ENCODE measurements at regions of chr11 and their contacts with region 1.

Region 1: DNA sequence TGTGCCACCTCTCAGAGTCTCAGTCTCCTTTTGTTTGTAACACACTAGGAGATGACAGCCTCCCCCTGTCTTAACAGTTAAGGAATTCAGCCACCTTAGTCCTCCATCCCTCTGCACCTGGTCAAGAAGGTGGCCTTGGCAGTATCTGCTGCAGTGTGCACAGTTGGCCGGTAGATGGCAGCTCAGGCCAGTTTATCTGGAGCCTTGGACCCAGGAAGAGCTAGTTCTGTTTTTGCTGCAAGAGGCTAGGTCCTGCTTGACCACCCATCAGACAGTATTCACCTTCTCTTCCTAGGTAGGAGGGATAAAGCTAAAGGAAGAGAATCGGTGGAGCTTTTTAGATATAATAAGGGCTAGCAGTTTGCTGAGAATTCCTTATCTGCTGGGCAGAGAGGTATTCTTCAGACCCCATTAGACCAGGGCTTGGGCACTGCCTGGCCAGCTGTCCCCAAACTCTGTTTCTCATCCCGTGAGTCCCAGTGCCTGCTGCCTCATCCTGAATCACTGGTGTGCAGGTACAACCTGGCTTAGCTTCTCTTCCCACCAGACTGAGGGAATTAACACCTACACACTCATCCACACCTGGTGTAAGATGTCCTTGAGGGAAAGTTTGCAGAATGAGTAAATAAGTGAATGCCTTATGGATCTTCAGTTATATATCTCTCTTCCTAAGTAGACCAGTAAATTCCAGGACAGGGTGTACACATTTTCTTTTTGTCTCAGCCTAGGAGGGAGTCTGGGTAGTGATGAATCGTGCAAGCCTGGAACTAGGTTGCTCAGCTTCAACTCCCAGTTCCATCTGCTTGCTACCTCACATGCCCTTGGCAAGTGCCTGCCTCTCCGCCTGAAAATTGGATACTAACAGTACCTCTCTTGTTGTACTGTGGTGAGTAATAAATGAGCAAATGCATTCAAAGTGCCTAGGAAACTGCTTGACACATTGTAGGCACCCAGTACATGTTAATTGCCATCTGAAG is 70.8 kb upstream of the NARS2 start:
- DNase-seq: peak; percentile 90
- H3K4me3 Mint-ChIP-seq: peak overlapping the region; percentile 21
- H3K27ac Mint-ChIP-seq: peak overlapping the region; percentile 21
- H3K4me1 Mint-ChIP-seq: peaks cover 38% of the 10 kb centered on the region
- H3K27me3 Mint-ChIP-seq: no peaks in the 10 kb centered on the region

Region 2: GRCh38 chr11:78416305-78417178 is 229.0 kb before region 1 on chr11:
- intact Hi-C with region 1: loop called (anchors 10 kb)
- DNase-seq: peak; percentile 95
- H3K4me3 Mint-ChIP-seq: peak overlapping the region; percentile 98
- H3K27ac Mint-ChIP-seq: peak overlapping the region; percentile 95
- H3K4me1 Mint-ChIP-seq: peaks cover 57% of the 10 kb centered on the region
- H3K27me3 Mint-ChIP-seq: peaks cover 11% of the 10 kb centered on the region

Region 3: DNA sequence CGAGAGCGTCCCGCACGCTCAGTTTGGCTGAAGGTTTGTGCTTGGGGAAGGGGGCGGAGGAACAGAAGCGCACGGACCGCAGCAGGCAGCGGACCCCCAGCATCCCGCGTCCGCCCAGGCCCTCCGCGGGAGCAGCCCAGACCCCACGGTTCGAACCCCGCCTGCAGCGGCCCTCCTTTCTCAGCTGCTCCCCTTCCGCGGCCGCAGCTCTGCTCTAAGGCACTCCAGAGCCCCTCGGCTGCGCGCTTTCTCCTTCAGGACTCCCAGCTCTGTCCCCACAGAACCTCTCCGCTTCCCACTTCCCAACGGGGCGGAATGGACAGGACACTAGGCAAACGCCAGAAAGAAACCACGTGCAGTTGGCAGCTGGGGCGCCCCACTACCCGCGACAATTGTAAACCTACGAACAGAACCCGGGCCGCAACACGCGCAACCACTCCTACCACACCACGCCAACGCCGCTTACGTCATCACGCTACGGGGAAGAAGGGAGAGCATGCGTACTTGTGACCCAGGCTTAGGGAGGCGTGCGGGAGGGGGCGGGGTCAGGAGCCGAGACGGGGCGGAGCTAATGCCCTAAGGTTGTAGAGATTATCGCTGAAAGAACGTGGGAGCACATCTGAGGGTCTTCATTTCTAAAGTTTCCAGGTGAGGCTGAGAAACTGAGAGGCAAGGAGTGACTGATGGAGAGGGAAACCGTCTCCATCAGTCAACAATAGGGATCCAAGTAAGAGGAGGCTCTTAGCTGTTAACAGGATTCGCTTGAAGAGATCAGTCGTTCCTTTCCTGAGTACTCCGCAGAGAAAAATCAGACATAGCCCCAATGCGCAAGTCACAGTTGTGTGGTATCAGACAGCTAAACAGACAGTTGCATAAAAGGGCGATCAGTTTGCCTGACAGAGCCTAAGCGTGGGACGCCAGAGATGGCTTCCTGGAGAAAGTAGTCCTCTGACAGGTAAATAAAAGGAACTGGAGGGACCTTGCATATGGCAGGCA is 70.8 kb before region 1 on chr11 and contains the start of gene NARS2:
- intact Hi-C with region 1: loop called (anchors 1 kb)
- DNase-seq: peak; percentile 99
- H3K4me3 Mint-ChIP-seq: peak within 1 kb of the TSS; percentile 94
- H3K27ac Mint-ChIP-seq: peak within 1 kb of the TSS; percentile 92
- H3K4me1 Mint-ChIP-seq: peaks cover 28% of the 10 kb centered on the region
- H3K27me3 Mint-ChIP-seq: no peaks in the 10 kb centered on the region
- total RNA-seq, gene NARS2: 38.0 and 43.3 TPM in 2 replicates

Region 4: DNA sequence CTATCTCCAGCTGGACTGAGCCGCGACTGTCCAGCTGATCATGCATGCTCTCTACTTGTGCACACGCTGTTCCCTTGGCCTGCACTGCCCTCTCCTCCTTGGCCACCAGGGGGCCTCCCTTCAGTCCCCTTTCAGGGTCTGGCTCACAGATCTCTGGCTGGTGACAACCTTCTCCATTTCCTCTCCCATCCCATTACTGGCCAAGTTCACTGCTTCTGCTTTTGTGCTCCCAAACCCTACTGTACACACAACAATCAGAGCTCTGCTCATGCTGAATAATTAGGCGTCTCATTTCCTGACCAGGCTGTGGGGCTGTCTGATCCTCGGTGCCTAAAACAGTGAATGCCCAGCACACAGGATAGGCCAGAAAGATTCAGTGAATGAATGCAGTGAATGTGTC is 153.1 kb after region 1 on chr11:
- intact Hi-C with region 1: loop called (anchors 5 kb)
- DNase-seq: peak; percentile 79
- H3K4me3 Mint-ChIP-seq: no peak overlapping the region
- H3K27ac Mint-ChIP-seq: no peak overlapping the region
- H3K4me1 Mint-ChIP-seq: no peaks in the 10 kb centered on the region
- H3K27me3 Mint-ChIP-seq: peaks cover 4% of the 10 kb centered on the region

Region 5: GRCh38 chr11:79100093-79100910 is 454.8 kb after region 1 on chr11:
- intact Hi-C with region 1: loop called (anchors 1 kb)
- DNase-seq: peak; percentile 77
- H3K4me3 Mint-ChIP-seq: no peak overlapping the region
- H3K27ac Mint-ChIP-seq: no peak overlapping the region
- H3K4me1 Mint-ChIP-seq: no peaks in the 10 kb centered on the region
- H3K27me3 Mint-ChIP-seq: peaks cover 6% of the 10 kb centered on the region

Region 6: GRCh38 chr11:79493555-79494171 is 848.1 kb after region 1 on chr11:
- intact Hi-C with region 1: loop called (anchors 2 kb)
- DNase-seq: peak; percentile 83
- H3K4me3 Mint-ChIP-seq: no peak overlapping the region
- H3K27ac Mint-ChIP-seq: no peak overlapping the region
- H3K4me1 Mint-ChIP-seq: peaks cover 2% of the 10 kb centered on the region
- H3K27me3 Mint-ChIP-seq: peaks cover 5% of the 10 kb centered on the region